ENCODE measurements at regions of chr7 and their contacts with region 1.

Region 1: GRCh38 chr7:35801392-35802101 is 690 bp downstream of the SEPTIN7 start:
- DNase-seq: peak; percentile 90

Region 2: GRCh38 chr7:34973400-34973760 is 828.2 kb before region 1 on chr7:
- intact Hi-C with region 1: no loop called
- DNase-seq: no peak

Region 3: DNA sequence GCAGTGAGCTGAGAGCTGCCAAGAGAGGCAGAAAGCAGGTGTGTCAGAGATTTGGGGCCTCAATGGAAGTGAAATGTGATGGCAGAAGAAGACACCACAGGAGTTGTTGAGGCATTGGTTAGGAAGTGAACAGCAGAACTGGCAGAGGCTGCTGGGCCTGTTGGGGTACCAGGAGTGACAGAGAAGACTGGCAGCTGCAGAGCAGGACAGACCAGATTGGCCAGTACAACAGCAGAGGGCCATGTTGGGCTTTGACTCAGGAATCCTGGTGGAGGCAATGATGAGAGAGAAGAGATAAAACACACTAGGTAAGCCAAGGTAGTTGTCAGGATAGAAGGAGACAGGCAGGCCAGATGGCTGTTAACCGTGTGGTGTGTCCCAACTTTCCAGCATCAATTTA is 86.7 kb before region 1 on chr7:
- intact Hi-C with region 1: loop called (anchors 5 kb)
- DNase-seq: no peak

Region 4: DNA sequence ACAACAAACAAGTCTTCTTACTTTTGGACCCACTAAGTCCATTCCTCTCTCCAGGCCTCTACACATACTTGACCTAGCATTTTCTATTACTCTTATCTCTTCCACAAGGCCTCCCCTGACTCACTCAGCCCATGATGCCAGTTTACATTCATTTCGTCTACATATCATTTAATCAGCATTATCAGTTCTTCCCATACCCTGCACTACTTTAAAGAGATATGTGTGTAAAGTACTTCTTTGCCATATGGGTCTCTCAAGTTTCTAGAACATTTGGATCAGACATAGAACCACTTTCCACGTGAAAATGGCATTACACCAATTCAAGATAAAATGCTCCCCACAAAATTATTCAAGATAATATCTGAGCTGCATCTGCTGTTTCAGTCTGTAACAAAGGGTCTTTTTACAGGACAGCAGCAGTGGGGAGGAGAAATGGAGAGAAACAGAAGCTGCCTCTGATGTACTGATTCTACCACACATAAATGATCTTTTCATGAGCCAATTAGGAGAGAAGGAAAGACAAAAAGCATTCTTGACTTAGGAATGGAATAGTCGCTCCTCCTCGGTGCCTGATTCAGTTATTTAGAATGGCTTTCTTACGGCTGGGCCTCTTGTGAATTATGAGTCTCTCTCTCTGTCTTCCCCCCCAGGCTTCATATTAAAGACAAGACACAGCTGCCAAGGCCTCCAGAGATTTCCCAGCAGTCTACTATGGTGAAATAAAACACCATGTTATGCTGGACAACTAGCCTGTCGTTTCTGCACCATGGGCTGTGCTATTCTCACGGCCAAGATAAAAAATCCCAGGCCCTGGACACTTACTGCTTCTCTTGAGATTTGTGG is 47.6 kb before region 1 on chr7:
- intact Hi-C with region 1: loop called (anchors 5 kb)
- DNase-seq: no peak

Region 5: DNA sequence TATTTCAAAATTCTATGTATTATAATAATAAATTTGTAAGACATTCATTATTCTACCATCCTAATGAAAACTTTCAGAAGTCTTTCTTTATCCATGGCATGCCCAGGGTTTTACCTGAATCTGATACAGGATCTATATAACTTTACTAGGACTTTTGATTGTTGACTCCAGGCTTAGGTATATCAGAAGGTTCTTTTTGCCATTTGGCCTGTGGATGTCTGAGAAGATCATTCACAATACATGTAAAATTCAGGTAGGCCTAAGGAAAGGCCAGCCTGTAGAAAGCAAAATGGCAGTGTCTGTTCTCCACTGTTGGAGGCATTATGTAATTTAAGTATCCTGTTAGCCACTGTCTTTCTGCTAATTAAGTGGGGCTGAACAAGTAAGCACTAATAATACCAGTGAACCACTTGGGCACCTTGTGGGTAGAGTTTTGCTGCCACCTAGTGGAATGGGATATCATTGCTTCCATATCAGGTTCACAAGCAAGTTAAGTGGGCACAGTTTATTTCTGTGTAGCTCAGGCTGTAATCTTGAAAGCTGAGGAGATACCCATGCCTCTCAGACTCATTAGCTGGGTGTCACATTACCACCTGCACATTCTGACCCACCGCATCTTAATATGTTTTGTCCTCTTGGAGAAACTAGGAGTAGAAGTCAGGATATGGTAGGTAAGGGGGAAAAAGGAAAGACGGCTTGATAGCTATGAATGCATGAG is 104.8 kb after region 1 on chr7:
- intact Hi-C with region 1: loop called (anchors 5 kb)
- DNase-seq: no peak

Measured in cardiac septum (tissue), 1 donor.